Activated T-helper 2 cell treated with anti-CD3 and anti-CD28 coated beads, Interferon-gamma antibody, Interleukin-2, Interleukin-4, amounts not matched to agents 10 μg/mL and 5 μg/mL and 100 μg/mL, durations not matched to agents 14 hours and 24 hours and 36 hours (primary cell): ENCODE measurements at regions of chr6 and their contacts with region 1.

Region 1: DNA sequence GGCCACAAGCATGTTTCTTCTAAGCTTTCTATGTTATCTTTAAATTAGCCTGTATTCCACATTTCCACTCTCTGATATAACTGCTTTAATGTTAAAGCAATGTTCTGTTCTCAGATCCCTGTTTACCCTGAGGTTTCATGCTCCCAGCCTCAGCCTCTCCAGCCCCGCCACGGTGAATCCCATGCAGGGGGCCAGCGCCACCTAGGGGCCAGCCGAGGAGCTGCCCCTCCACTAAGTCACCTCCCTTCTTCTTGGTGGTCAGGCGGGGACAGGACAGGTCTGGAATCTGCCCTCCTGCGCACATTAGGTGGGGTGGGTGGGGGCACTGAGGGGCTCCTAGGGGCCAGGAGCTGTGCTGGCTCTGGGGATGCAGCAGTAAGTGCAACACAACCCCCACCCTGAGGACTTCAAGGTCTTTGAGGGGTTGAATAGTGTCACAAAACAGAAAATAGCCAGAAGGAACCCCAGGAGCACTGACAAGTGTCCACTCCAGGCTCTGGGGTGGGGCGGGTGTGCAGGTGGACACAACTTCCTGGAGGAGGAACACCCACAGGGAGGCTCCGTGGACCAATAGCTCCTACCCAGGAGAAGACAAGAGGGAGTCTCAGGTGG is 61.6 kb downstream of the RAB44 start:
- DNase-seq: peak; percentile 73
- H3K4me3 Mint-ChIP-seq: no peak overlapping the region
- H3K27ac Mint-ChIP-seq: no peak overlapping the region
- H3K4me1 Mint-ChIP-seq: peaks cover 40% of the 10 kb centered on the region
- H3K27me3 Mint-ChIP-seq: no peaks in the 10 kb centered on the region

Region 2: DNA sequence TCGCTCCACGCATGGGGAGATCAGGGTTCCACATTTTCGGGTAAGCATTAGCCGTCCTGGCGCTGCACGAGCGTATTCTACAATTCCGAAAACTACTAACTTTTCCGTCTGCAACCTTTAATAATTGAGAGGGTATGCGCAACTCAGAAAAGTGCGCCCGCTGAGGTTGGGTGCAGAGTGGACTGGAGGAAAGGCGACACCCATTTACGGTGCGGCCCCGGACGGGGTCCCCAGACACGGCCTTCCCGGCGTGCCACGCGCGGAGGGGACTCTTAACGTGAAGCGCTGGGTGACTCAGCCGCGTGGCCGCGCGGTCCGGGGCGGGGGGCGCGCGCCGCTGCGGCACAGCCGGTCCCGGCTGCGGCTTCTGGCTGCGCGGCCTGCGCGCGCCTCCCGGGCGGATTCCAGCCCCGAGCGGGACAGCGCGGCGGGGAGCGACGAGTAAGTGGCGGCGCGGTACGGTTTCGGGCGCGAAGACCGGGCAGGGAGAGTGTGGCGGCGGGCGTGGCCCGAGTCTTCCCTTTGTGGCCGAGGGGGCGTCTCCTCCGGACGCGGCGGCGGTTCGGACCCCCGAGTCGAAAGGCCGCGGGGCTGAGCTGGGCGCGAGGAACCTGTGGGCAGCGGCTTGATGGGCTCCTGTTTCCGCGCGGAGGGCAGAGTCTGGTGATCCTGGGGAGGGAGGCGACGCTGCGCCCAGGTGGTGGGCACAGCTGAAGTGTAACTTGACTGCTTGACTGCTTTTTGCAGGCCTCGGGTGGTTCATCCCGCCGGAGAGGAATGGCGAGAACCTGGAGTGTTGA is 316.4 kb before region 1 on chr6 and contains the starts of genes KCTD20 and PXT1:
- intact Hi-C with region 1: loop called (anchors 5 kb)
- DNase-seq: peak; percentile 84
- H3K4me3 Mint-ChIP-seq: peak within 1 kb of the TSS; percentile 93
- H3K27ac Mint-ChIP-seq: peak within 1 kb of the TSS; percentile 97
- H3K4me1 Mint-ChIP-seq: peaks cover 30% of the 10 kb centered on the region
- H3K27me3 Mint-ChIP-seq: no peaks in the 10 kb centered on the region
- total RNA-seq, gene KCTD20: 51.1 and 54.8 TPM in 2 replicates
- total RNA-seq, gene PXT1: 0.14 and 0.27 TPM in 2 replicates

Region 3: GRCh38 chr6:36546920-36547645 is 212.2 kb before region 1 on chr6 and contains the start of gene STK38:
- intact Hi-C with region 1: loop called (anchors 5 kb)
- DNase-seq: peak; percentile 85
- H3K4me3 Mint-ChIP-seq: peak within 1 kb of the TSS; percentile 98
- H3K27ac Mint-ChIP-seq: peak within 1 kb of the TSS; percentile 95
- H3K4me1 Mint-ChIP-seq: peaks cover 33% of the 10 kb centered on the region
- H3K27me3 Mint-ChIP-seq: no peaks in the 10 kb centered on the region
- total RNA-seq, gene STK38: 22.9 and 25.0 TPM in 2 replicates

Region 4: GRCh38 chr6:36623547-36624459 is 135.5 kb before region 1 on chr6:
- intact Hi-C with region 1: loop called (anchors 1 kb)
- DNase-seq: peak; percentile 68
- H3K4me3 Mint-ChIP-seq: no peak overlapping the region
- H3K27ac Mint-ChIP-seq: no peak overlapping the region
- H3K4me1 Mint-ChIP-seq: peaks cover 22% of the 10 kb centered on the region
- H3K27me3 Mint-ChIP-seq: no peaks in the 10 kb centered on the region

Region 5: GRCh38 chr6:36697481-36697903 is 61.8 kb before region 1 on chr6 and contains the start of gene RAB44:
- intact Hi-C with region 1: loop called (anchors 1 kb)
- DNase-seq: no peak
- H3K4me3 Mint-ChIP-seq: no peak within 1 kb of the TSS
- H3K27ac Mint-ChIP-seq: no peak within 1 kb of the TSS
- H3K4me1 Mint-ChIP-seq: peaks cover 33% of the 10 kb centered on the region
- H3K27me3 Mint-ChIP-seq: peaks cover 7% of the 10 kb centered on the region
- total RNA-seq, gene RAB44: not detected in 2 replicates

Region 6: GRCh38 chr6:36727505-36728021 is 31.7 kb before region 1 on chr6:
- intact Hi-C with region 1: loop called (anchors 2 kb)
- DNase-seq: no peak
- H3K4me3 Mint-ChIP-seq: no peak overlapping the region
- H3K27ac Mint-ChIP-seq: no peak overlapping the region
- H3K4me1 Mint-ChIP-seq: peaks cover 25% of the 10 kb centered on the region
- H3K27me3 Mint-ChIP-seq: peaks cover 1% of the 10 kb centered on the region

Region 7: GRCh38 chr6:36735110-36736071 is 23.9 kb before region 1 on chr6:
- intact Hi-C with region 1: loop called (anchors 2 kb)
- DNase-seq: no peak
- H3K4me3 Mint-ChIP-seq: no peak overlapping the region
- H3K27ac Mint-ChIP-seq: peak overlapping the region; percentile 64
- H3K4me1 Mint-ChIP-seq: peaks cover 14% of the 10 kb centered on the region
- H3K27me3 Mint-ChIP-seq: no peaks in the 10 kb centered on the region

Region 8: DNA sequence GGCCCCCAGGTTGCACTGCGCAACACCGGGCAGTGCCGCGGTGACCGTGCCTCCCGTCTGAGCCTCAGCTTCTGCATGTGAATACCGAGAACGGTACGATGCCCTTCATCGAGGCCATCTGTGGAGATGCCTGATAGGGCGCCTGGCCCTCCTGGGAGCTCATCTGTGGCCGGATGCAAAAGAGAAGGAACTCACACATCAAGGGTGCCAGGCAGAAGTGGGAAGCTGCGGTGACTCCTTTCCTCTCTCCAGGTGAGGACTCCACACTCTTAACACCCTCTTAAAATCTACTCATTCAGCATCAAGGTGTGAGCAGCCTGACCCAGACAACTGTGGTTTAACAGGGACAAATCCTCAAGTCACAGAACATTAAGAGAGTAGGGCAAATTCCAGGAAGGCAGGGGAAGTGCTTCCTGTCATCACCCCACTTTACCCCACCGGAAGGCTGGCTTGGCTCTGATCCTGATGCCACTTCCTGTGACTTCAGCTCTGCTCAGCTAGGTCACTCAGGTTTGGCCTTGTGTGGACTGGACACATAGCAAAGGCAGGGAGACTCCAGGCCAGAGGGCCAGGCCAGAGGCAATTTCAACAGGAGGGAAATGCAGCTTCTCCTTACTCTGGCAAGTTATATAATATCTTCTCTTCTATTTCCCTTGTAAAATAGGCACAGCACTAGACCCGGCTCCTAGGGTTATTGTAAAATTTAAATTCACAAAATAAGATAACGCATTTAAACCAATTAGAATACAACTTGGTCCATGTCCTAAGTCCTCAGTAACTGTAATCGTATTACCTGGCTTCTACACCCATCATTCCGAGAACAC is 10.6 kb after region 1 on chr6:
- intact Hi-C with region 1: no loop called
- DNase-seq: no peak
- H3K4me3 Mint-ChIP-seq: peak overlapping the region; percentile 54
- H3K27ac Mint-ChIP-seq: peak overlapping the region; percentile 78
- H3K4me1 Mint-ChIP-seq: peaks cover 42% of the 10 kb centered on the region
- H3K27me3 Mint-ChIP-seq: no peaks in the 10 kb centered on the region